ENCODE measurements at regions of chr6 and their contacts with region 1.

Region 1: GRCh38 chr6:26122793-26123674 is 35.8 kb downstream of the HFE start:
- DNase-seq: peak; percentile 91
- ATAC-seq: peak; percentile 91

Region 2: GRCh38 chr6:26054857-26055669 is 68.0 kb before region 1 on chr6:
- intact Hi-C with region 1: loop called (anchors 2 kb)
- DNase-seq: peak; percentile 85
- ATAC-seq: peak; percentile 91

Region 3: GRCh38 chr6:26103770-26104456 is 19.1 kb before region 1 on chr6:
- intact Hi-C with region 1: loop called (anchors 1 kb)
- DNase-seq: peak; percentile 88
- ATAC-seq: peak; percentile 95

Region 4: DNA sequence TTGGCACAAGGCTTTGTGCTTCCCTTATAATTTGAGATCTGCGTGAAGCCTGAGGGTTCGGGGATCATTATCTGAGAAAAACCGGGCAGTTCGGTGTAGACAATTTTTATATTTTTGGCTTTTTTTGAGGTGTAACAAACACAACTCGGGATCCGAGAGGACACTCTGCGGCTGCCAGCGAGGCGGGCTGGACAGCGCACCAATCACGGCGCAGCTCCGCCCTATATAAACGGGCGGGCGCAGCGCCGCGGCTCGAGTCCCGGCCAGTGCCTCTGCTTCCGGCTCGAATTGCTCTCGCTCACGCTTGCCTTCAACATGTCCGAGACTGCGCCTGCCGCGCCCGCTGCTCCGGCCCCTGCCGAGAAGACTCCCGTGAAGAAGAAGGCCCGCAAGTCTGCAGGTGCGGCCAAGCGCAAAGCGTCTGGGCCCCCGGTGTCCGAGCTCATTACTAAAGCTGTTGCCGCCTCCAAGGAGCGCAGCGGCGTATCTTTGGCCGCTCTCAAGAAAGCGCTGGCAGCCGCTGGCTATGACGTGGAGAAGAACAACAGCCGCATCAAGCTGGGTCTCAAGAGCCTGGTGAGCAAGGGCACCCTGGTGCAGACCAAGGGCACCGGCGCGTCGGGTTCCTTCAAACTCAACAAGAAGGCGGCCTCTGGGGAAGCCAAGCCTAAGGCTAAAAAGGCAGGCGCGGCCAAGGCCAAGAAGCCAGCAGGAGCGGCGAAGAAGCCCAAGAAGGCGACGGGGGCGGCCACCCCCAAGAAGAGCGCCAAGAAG is 33.2 kb after region 1 on chr6:
- intact Hi-C with region 1: loop called (anchors 1 kb)
- DNase-seq: peak; percentile 96
- ATAC-seq: peak; percentile 90

Region 5: GRCh38 chr6:26196846-26197648 is 74.0 kb after region 1 on chr6:
- intact Hi-C with region 1: loop called (anchors 1 kb)
- DNase-seq: peak; percentile 70
- ATAC-seq: peak; percentile 60

Region 6: GRCh38 chr6:26204332-26205165 is 81.5 kb after region 1 on chr6:
- intact Hi-C with region 1: loop called (anchors 1 kb)
- DNase-seq: peak; percentile 91
- ATAC-seq: peak; percentile 92

Region 7: GRCh38 chr6:26394289-26394688 is 271.3 kb after region 1 on chr6:
- intact Hi-C with region 1: no loop called
- DNase-seq: no peak
- ATAC-seq: no peak

Measured in Right ventricle myocardium inferior (tissue), 1 donor.